ENCODE measurements at regions of chr10 and their contacts with region 1.

Region 1: DNA sequence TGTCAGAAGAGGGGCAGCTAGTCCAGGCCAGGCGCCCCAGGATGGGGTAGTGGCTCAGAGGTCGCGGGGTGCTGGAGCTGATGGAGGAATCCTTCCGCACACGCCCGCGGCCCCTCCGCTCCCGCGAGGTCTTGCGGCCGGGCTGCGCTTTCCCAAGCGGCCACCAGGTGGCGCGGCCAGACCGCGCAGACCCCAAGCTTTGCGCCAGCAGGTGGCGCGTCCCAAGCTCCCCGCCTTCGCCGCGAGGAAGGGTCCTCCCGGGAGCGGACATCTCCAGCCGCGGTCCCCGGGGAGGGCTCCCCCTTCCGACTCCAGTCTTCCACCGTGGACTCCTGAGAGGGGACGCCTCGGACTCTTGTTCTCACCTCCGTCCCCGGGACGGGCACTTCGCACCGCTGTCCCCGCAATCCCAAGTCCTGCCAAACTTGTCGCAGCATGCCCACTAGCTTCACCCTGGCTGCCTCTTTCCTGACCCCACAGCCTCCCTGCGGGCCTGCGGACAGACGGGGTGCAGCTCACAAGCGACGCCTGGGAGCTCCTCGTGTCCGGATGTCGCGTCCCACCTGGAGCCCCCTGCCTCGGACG is 19.4 kb downstream of the KCNK18 start:
- DNase-seq: peak; percentile 80 to 85 (median 82)
- H3K4me3 ChIP-seq: peak overlapping the region; percentile 19 to 82 (median 67)
- H3K27ac ChIP-seq: no peak overlapping the region
- H3K4me1 ChIP-seq: peaks cover 0 to 16% (median 14%) of the 10 kb centered on the region in 4 experiments
- H3K27me3 ChIP-seq: peaks cover 0 to 40% (median 24%) of the 10 kb centered on the region in 5 experiments

Region 2: DNA sequence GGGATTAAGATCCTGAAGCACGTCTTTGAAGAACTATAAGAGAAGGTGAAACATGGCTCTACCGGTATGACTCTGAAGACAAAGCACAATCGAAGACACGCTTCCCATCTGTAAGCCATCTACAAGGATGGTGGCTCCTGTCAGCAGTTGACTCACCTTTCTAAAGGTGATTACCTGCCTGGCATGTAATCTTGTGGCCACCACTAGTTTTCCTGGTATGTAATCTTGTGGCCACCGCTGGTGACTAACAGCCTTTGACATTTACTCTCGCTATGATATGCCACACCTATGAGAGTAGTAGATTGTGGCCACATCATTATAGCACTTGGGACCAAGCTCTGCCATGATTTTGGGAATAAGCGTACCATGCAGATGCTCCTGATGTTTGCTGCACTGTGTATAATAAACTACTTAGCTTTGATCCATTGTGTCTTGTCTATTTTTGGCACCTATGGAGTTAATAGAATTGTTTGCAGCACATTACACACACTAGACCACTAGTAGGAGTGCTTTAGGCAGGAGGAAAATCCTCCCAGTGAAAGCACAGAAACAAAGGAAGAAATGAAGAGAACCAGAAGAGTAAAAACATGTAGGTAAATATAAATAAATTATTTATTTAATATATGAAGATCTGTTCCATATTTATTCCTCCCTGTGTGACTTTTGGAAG is 138.4 kb before region 1 on chr10:
- CTCF ChIA-PET with region 1: no interaction called
- POLR2A ChIA-PET with region 1: no interaction called
- DNase-seq: no peak
- H3K4me3 ChIP-seq: no peak overlapping the region
- H3K27ac ChIP-seq: no peak overlapping the region
- H3K4me1 ChIP-seq: no peaks in the 10 kb centered on the region
- H3K27me3 ChIP-seq: peaks cover 0 to 11% (median 2%) of the 10 kb centered on the region in 5 experiments

Region 3: GRCh38 chr10:117094856-117095255 is 121.8 kb before region 1 on chr10:
- CTCF ChIA-PET with region 1: no interaction called
- POLR2A ChIA-PET with region 1: no interaction called
- DNase-seq: no peak
- H3K4me3 ChIP-seq: no peak overlapping the region
- H3K27ac ChIP-seq: no peak overlapping the region
- H3K4me1 ChIP-seq: no peaks in the 10 kb centered on the region
- H3K27me3 ChIP-seq: peaks cover under 1 to 13% (median 6%) of the 10 kb centered on the region in 5 experiments

Region 4: DNA sequence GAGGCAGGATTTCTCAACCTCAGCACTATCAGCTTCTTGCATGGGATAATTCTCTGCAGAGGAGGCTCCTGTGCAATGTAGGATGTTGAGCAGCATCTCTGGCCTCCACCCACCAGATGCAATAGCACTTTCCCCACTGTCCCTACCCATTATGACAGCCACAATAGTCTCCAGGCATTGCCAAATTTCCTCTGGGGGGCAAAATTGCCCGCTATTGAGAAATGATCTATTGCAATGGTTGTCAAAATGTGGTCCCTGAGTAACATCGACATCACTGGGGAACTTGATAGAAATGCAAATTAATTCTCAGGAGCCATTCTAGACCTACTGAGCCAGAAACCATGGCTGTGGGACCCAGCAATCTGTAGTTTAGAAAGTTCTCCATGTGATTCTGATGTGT is 12.4 kb before region 1 on chr10:
- CTCF ChIA-PET with region 1: interaction called, 19 read pairs
- POLR2A ChIA-PET with region 1: no interaction called
- DNase-seq: no peak
- H3K4me3 ChIP-seq: no peak overlapping the region
- H3K27ac ChIP-seq: no peak overlapping the region
- H3K4me1 ChIP-seq: no peaks in the 10 kb centered on the region
- H3K27me3 ChIP-seq: peaks cover 0 to 2% (median 0%) of the 10 kb centered on the region in 5 experiments

Region 5: GRCh38 chr10:117241541-117242462 is 25.1 kb after region 1 on chr10:
- CTCF ChIA-PET with region 1: interaction called, 15 read pairs
- POLR2A ChIA-PET with region 1: interaction called, 3 read pairs
- DNase-seq: peak; percentile 60 to 82 (median 67)
- H3K4me3 ChIP-seq: peak overlapping the region; percentile 49 to 76 (median 60)
- H3K27ac ChIP-seq: no peak overlapping the region
- H3K4me1 ChIP-seq: peaks cover 0 to 26% (median 25%) of the 10 kb centered on the region in 4 experiments
- H3K27me3 ChIP-seq: peaks cover 0 to 12% (median 0%) of the 10 kb centered on the region in 5 experiments

Region 6: DNA sequence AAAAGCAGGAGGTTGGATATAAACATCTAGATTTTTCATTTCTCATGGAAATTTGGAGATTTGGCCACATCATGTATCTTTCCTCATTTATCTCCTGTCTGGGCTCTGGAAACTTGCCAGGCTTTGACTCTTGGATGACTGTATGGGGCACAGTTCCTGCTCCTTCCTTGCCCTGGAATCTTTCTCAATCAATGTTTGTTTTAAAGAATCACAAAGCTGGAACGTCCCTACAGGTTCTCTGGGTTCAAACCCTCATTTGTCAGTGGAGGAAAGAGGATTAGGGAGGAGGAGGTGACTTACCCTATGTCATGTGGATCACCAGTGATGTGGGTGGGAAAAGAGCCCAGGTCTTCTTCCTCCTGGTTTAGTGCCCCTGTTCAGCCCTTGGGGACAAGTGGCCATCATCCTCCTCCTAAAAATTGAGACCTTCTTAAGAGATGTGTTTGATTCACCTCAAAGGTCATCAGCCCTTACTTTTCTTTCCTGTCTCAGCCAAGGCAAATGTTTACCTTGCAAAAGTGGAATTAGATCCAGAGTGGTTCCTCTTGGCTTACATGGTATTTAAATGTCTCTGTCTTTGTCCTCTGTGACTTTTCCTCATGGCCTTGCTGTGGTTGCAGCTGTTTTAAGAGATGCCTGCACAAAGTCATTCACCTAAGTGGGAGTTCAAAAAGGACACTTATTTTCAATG is 197.4 kb after region 1 on chr10:
- CTCF ChIA-PET with region 1: no interaction called
- POLR2A ChIA-PET with region 1: no interaction called
- DNase-seq: no peak
- H3K4me3 ChIP-seq: no peak overlapping the region
- H3K27ac ChIP-seq: no peak overlapping the region
- H3K4me1 ChIP-seq: peaks cover 25 to 70% (median 50%) of the 10 kb centered on the region in 4 experiments
- H3K27me3 ChIP-seq: no peaks in the 10 kb centered on the region

Measured in common myeloid progenitor, CD34-positive (primary cell).